CD8-positive, alpha-beta T cell (primary cell): ENCODE measurements at regions of chr19 and their contacts with region 1.

Region 1: DNA sequence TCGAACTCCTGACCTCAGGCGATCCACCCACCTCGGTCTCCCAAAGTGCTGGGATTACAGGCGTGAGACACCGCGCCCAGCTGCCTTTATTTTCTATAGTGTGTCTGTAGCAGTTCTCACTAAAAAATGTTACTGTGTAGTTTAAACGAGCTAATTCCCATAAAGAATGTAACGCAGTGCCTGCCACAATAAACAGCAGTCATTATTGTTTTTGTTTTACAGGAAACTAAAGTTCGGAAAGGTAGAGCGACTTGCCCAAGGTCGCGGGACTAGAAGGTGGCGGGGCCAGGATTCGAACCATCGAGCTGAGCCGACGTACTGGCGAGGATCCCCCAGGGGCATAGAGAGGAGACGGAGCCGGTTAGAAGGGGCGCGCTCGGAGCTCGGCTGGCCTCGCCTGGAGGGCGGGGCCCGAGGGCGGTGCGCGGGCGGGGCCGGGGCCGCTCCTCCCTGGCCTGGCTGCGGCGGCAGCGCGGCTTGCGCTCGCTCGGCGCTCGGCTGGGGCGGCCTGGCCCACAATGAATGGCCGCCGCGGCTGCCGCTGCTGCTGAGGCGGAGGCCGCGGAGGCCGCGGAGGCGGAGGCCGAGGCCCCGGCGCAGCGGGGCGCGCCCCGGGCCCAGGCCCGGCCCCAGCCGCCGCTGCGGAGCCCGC is at the start of gene NACC1:
- DNase-seq: peak; percentile 81 to 93 (median 87)
- ATAC-seq: peak; percentile 82
- H3K4me3 ChIP-seq: peak within 1 kb of the TSS; percentile 65 to 78
- H3K4me3 Mint-ChIP-seq: peak within 1 kb of the TSS; percentile 98
- H3K27ac ChIP-seq: peak within 1 kb of the TSS; percentile 41 to 61
- H3K27ac Mint-ChIP-seq: peak within 1 kb of the TSS; percentile 96
- H3K4me1 ChIP-seq: peaks cover 35% of the 10 kb centered on the region
- H3K4me1 Mint-ChIP-seq: peaks cover 60% of the 10 kb centered on the region
- H3K27me3 ChIP-seq: no peaks in the 10 kb centered on the region
- H3K27me3 Mint-ChIP-seq: no peaks in the 10 kb centered on the region
- CTCF ChIP-seq: no peak
- total RNA-seq, gene NACC1: 16.8 to 20.8 TPM

Region 2: GRCh38 chr19:12890787-12891552 is 226.9 kb before region 1 on chr19 and contains the start of gene GCDH:
- CTCF ChIA-PET with region 1: no interaction called
- POLR2A ChIA-PET with region 1: interaction called, 7 read pairs
- intact Hi-C with region 1: loop called (anchors 1 to 5 kb)
- DNase-seq: peak; percentile 92 to 99 (median 95)
- ATAC-seq: peak; percentile 87
- H3K4me3 ChIP-seq: peak within 1 kb of the TSS; percentile 87 to 92
- H3K4me3 Mint-ChIP-seq: peak within 1 kb of the TSS; percentile 99
- H3K27ac ChIP-seq: peak within 1 kb of the TSS; percentile 77 to 79
- H3K27ac Mint-ChIP-seq: peak within 1 kb of the TSS; percentile 98
- H3K4me1 ChIP-seq: peaks cover 23% of the 10 kb centered on the region
- H3K4me1 Mint-ChIP-seq: peaks cover 29% of the 10 kb centered on the region
- H3K27me3 ChIP-seq: no peaks in the 10 kb centered on the region
- H3K27me3 Mint-ChIP-seq: no peaks in the 10 kb centered on the region
- CTCF ChIP-seq: no peak
- total RNA-seq, gene GCDH: 36.0 to 41.7 TPM

Region 3: DNA sequence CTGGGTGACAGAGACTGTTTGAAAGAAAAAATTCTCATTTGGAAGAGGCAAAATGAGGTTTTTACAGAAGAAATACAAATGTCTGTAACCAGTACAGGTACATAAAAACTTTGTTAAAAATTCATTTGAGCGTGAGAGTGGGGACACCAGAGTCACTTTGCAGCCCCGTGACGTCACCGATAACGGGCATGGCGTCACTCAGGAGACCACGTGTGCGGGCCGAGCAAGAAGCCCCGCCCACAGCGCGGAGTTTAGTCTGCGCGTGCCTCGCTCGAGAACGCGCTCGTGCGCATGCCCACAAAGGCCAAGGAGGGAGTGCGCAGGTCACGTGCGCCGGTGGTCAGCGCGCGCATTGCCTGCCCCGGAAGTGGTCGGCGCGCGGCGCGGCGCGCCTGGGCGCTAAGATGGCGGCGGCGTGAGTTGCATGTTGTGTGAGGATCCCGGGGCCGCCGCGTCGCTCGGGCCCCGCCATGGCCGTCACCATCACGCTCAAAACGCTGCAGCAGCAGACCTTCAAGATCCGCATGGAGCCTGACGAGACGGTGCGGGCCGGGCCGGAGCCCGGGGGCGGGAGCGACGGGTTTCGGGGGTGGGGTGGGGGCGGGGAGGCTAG is 172.3 kb before region 1 on chr19 and contains the start of gene RAD23A:
- CTCF ChIA-PET with region 1: no interaction called
- POLR2A ChIA-PET with region 1: no interaction called
- intact Hi-C with region 1: no loop called
- DNase-seq: peak; percentile 97 to 100 (median 98)
- ATAC-seq: peak; percentile 86
- H3K4me3 ChIP-seq: peak within 1 kb of the TSS; percentile 60 to 64
- H3K4me3 Mint-ChIP-seq: peak within 1 kb of the TSS; percentile 91
- H3K27ac ChIP-seq: peak within 1 kb of the TSS; percentile 67 to 83
- H3K27ac Mint-ChIP-seq: peak within 1 kb of the TSS; percentile 96
- H3K4me1 ChIP-seq: peaks cover 35% of the 10 kb centered on the region
- H3K4me1 Mint-ChIP-seq: peaks cover 43% of the 10 kb centered on the region
- H3K27me3 ChIP-seq: no peaks in the 10 kb centered on the region
- H3K27me3 Mint-ChIP-seq: no peaks in the 10 kb centered on the region
- CTCF ChIP-seq: no peak
- total RNA-seq, gene RAD23A: 86.3 to 90.8 TPM

Region 4: DNA sequence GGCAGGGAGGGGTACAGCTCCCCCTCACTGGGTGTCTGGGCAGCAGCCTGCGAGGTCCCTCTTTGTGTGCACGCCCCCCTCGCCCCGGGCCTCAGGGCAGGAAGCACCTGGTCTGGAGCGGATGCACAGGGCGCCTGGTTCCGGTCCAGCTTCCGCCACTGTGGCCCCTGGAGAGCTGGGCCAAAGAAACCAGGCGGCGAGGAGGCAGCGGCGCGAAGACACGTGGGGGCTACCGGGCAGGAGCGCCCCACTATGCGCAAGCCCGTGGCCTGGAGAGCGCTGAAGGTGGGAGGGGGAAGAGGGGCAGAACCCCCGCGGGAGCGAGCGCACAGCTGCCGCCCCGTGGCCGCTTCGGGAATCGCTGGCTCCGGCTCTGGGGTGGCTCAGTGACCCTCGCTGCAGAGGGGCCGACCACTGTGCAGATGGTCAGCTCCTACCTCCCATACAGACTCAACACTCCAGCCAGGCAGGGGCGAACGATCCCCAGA is 13.5 kb before region 1 on chr19:
- CTCF ChIA-PET with region 1: interaction called, 10 read pairs
- POLR2A ChIA-PET with region 1: interaction called, 18 read pairs
- intact Hi-C with region 1: loop called (anchors 1 to 2 kb)
- DNase-seq: peak in 8 of 9 experiments; percentile 53 to 79 (median 70)
- ATAC-seq: peak; percentile 64
- H3K4me3 ChIP-seq: peak overlapping the region; percentile 59 to 81
- H3K4me3 Mint-ChIP-seq: peak overlapping the region; percentile 89
- H3K27ac ChIP-seq: peak overlapping the region; percentile 60 to 63
- H3K27ac Mint-ChIP-seq: peak overlapping the region; percentile 87
- H3K4me1 ChIP-seq: peaks cover 51% of the 10 kb centered on the region
- H3K4me1 Mint-ChIP-seq: peaks cover 34% of the 10 kb centered on the region
- H3K27me3 ChIP-seq: no peaks in the 10 kb centered on the region
- H3K27me3 Mint-ChIP-seq: no peaks in the 10 kb centered on the region
- CTCF ChIP-seq: peak; percentile 92

Region 5: DNA sequence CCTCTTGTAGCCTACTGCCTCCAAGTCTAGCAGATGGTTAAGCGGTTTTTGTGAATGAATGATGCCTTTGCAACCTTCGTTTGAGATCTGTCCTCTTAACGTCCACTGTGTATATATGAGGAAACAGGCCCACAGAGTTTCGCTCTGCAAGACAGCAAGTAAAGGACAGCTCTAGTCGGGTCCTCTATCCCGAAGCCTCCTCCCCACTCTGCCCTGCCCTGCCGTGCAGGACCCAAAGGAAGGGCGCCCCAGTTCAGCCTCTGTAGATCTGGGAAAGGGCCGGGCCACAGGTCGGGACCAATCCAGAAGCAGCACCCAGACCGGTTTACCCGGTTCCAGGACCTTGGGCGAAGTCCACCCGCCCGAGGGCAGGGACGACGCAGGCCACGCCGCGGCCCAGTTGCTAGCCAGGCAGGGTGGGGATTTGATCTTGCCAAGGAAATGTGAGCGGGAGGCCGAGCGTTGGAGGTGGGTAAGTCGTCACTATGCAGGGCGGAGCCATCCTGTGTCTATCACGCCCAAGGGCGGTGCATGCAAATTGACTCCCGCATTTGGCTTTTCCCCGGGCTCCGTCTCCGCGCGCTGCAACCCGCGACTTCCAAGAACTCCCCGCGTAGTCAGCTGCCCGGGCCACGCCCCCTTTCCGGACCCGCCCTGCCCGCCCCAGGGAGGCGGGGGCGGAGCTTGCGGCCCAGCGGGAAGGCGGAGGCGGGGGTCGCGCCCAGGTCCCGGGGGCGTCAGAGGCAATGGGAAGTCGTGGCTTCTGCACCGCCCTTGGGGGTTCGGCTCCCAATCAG is 44.8 kb after region 1 on chr19:
- CTCF ChIA-PET with region 1: interaction called, 3 read pairs
- POLR2A ChIA-PET with region 1: interaction called, 12 read pairs
- intact Hi-C with region 1: no loop called
- DNase-seq: peak; percentile 40 to 93 (median 82)
- ATAC-seq: peak; percentile 49
- H3K4me3 ChIP-seq: peak overlapping the region; percentile 56 to 58
- H3K4me3 Mint-ChIP-seq: peak overlapping the region; percentile 85
- H3K27ac ChIP-seq: peak overlapping the region; percentile 68 to 86
- H3K27ac Mint-ChIP-seq: peak overlapping the region; percentile 96
- H3K4me1 ChIP-seq: peaks cover 72% of the 10 kb centered on the region
- H3K4me1 Mint-ChIP-seq: peaks cover 67% of the 10 kb centered on the region
- H3K27me3 ChIP-seq: no peaks in the 10 kb centered on the region
- H3K27me3 Mint-ChIP-seq: no peaks in the 10 kb centered on the region
- CTCF ChIP-seq: no peak

Region 6: DNA sequence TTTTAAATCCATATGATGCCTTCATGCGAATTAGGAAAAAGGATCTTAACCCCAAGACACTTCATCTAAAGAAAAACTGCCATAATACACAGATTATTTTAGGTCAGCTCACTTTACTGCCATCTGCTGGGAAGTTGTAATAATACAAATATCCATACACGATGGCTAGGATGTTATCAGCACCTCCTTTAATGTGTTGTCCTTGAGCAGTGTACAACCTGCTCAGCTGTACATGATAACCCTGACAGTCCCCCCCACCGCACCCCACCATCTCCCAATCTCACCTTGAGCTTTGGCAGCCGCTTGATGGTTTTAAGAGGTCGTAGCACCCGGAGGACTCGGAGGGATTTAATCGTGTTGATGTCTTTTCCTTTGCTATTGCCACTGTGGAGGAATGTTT is 144.6 kb after region 1 on chr19:
- CTCF ChIA-PET with region 1: interaction called, 4 read pairs
- POLR2A ChIA-PET with region 1: no interaction called
- intact Hi-C with region 1: loop called in 1 of 2 experiments (anchors 10 kb)
- DNase-seq: peak in 2 of 9 experiments; percentile 61 to 72
- ATAC-seq: peak; percentile 59
- H3K4me3 ChIP-seq: no peak overlapping the region
- H3K4me3 Mint-ChIP-seq: no peak overlapping the region
- H3K27ac ChIP-seq: no peak overlapping the region
- H3K27ac Mint-ChIP-seq: no peak overlapping the region
- H3K4me1 ChIP-seq: no peaks in the 10 kb centered on the region
- H3K4me1 Mint-ChIP-seq: no peaks in the 10 kb centered on the region
- H3K27me3 ChIP-seq: no peaks in the 10 kb centered on the region
- H3K27me3 Mint-ChIP-seq: peaks cover 8% of the 10 kb centered on the region
- CTCF ChIP-seq: peak; percentile 79